Calu3 (cell line): ENCODE measurements at regions of chr3 and their contacts with region 1.

Region 1: DNA sequence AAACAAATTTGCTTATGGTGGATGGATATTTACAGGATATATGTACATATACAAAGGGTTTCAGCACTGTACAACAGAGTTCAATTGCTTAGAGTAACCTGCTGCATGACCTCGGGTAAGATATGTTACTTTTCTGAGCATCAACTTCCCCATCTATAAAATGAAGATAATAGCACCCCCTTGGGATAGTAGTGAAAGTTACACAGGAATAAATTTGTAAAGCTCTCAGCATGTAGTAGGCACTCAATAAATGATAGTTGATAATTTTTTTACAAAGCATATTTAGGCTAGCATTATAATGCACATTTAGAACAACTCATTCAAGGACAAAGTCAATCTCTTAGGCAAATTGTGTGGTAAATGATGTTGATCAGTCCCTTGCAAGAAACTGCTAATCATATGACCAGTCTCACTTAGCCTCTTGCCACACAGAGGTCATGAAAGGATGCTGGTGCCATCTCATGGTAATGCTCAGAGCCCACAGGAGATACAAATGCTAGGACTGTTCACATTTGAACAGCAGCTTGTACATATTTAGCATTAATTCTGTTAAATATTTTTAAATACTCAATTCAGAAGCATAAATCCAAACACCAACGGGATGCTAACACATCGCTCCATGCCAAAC is 123.9 kb downstream of the MAGI1 start:
- DNase-seq: no peak
- H3K4me3 Mint-ChIP-seq: no peak overlapping the region
- H3K27ac Mint-ChIP-seq: peak overlapping the region; percentile 35
- H3K4me1 Mint-ChIP-seq: peaks cover 45% of the 10 kb centered on the region
- H3K27me3 Mint-ChIP-seq: no peaks in the 10 kb centered on the region
- CTCF ChIP-seq: peak; percentile 4

Region 2: DNA sequence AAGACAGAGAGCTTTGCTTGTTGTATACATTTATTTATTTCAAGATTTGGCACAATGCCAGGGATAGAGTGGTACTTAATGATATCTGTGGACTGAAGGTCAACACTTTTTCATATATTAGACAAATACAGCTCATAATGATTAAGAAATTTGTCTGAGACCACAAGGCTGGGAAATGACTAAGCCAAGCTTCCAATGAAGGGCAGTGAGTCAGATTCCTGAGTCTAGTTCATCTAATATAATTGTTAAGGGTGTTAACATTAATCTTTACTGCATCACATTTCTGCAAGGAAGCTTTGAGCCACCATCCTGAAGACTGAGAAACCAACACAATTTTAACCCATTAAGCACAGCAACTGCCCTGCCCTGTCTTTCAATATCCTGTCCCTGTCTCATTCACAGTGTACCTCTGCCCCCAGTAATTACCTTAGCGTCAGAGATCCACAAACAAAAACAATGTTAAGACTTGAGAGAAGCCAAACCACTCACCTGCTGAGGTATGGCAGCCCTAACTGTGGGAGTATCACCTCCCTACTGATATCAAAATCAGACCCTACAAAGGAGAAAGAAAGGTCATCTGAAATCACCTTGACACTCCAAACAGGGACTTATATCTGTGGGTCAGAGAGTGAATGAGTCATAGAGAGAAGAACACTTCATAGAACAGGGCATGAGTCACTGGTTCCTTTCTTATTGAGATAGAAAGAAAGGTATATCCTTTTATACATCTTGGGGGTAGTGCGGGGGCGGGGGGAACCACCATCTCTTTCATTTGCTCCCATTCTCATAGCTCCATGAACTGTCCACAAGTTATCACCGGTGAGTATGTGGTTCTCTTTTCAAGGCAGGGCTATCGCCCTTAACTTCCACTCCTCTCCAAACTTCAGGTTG is 49.2 kb after region 1 on chr3:
- CTCF ChIA-PET with region 1: interaction called, 10 read pairs
- intact Hi-C with region 1: no loop called
- DNase-seq: peak; percentile 41
- H3K4me3 Mint-ChIP-seq: no peak overlapping the region
- H3K27ac Mint-ChIP-seq: peak overlapping the region; percentile 82
- H3K4me1 Mint-ChIP-seq: peaks cover 69% of the 10 kb centered on the region
- H3K27me3 Mint-ChIP-seq: no peaks in the 10 kb centered on the region
- CTCF ChIP-seq: no peak

Region 3: GRCh38 chr3:66138336-66139313 is 223.8 kb after region 1 on chr3:
- CTCF ChIA-PET with region 1: interaction called, 4 read pairs
- intact Hi-C with region 1: loop called (anchors 10 kb)
- DNase-seq: peak; percentile 64
- H3K4me3 Mint-ChIP-seq: no peak overlapping the region
- H3K27ac Mint-ChIP-seq: no peak overlapping the region
- H3K4me1 Mint-ChIP-seq: peaks cover 40% of the 10 kb centered on the region
- H3K27me3 Mint-ChIP-seq: no peaks in the 10 kb centered on the region
- CTCF ChIP-seq: peak; percentile 54